ENCODE measurements at regions of chr17 and their contacts with region 1.

Region 1: GRCh38 chr17:43846221-43846712 is 709 bp upstream of the CD300LG start:
- DNase-seq: peak; percentile 93

Region 2: DNA sequence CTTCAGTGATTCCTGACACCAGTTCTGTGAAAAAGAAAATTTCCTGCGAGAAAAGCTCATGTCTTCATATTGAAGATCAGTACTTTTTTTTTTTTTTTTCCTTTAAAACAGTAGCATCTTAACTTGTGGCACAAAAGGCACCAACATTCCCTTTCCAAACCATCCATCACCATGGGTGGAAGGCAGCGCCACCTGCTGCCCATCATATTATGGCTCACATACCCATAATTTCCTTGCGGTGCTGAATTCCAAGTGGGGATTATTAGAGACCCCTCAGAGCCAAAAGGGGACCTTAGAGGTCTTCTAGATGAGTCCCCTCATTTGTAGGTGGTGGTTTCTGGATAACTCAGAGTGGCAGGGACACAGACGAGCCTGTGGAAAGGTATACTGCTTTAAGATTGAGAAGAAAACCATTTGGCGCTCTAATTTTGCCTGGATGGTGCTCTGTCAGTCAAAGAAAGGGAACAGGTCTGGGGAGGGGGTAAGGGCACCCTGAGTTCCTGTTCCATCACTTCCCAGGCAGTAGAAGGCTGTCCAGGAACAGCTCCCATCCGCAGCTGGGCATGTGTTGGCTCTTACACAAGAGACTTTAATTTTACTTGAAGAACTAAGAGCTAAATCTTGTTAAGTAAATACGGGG is 79.7 kb before region 1 on chr17:
- CTCF ChIA-PET with region 1: interaction called, 15 read pairs
- POLR2A ChIA-PET with region 1: no interaction called
- DNase-seq: peak; percentile 72

Region 3: DNA sequence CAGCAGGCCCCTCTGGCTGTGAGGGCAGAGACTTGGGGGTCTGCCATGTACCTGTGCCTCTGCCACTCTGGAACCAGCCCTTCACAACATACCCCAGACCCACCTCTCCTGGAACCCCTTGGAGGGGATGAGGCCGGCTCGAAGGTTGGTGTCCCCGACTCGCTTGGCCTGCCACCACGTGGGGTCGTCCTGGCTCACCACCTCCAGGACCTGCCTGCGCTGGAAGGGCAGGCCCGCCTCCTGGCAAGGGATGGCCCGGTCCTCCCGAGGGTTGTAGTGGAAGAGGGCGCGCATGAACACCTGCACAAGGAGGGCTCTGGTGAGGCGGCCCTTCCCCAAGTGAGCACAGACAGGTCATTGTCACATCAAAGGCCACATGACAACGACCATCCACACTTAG is 25.5 kb before region 1 on chr17:
- CTCF ChIA-PET with region 1: no interaction called
- POLR2A ChIA-PET with region 1: no interaction called
- DNase-seq: no peak

Region 4: GRCh38 chr17:43857942-43858600 is 11.8 kb after region 1 on chr17:
- CTCF ChIA-PET with region 1: interaction called, 25 read pairs
- POLR2A ChIA-PET with region 1: interaction called, 5 read pairs
- DNase-seq: no peak

Region 5: GRCh38 chr17:43878260-43879175 is 32.3 kb after region 1 on chr17:
- CTCF ChIA-PET with region 1: interaction called, 10 read pairs
- POLR2A ChIA-PET with region 1: no interaction called
- DNase-seq: peak; percentile 91

Measured in HEK293T (cell line).